ENCODE measurements at regions of chr17 and their contacts with region 1.

Region 1: GRCh38 chr17:32877164-32877764 is 340 bp upstream of the MYO1D start:
- DNase-seq: peak; percentile 82 to 98 (median 90)
- ATAC-seq: peak; percentile 95 to 97 (median 96)
- H3K4me3 ChIP-seq: peak overlapping the region; percentile 35 to 45
- H3K4me3 Mint-ChIP-seq: peak overlapping the region; percentile 72 to 75 (median 74)
- H3K27ac ChIP-seq: peak overlapping the region; percentile 68
- H3K27ac Mint-ChIP-seq: peak overlapping the region; percentile 87 to 92
- H3K4me1 ChIP-seq: peaks cover 5 to 13% of the 10 kb centered on the region in 2 experiments
- H3K4me1 Mint-ChIP-seq: peaks cover 13 to 15% (median 15%) of the 10 kb centered on the region in 3 donors
- H3K27me3 ChIP-seq: no peaks in the 10 kb centered on the region
- H3K27me3 Mint-ChIP-seq: peaks cover 5 to 6% of the 10 kb centered on the region in 2 donors

Region 2: DNA sequence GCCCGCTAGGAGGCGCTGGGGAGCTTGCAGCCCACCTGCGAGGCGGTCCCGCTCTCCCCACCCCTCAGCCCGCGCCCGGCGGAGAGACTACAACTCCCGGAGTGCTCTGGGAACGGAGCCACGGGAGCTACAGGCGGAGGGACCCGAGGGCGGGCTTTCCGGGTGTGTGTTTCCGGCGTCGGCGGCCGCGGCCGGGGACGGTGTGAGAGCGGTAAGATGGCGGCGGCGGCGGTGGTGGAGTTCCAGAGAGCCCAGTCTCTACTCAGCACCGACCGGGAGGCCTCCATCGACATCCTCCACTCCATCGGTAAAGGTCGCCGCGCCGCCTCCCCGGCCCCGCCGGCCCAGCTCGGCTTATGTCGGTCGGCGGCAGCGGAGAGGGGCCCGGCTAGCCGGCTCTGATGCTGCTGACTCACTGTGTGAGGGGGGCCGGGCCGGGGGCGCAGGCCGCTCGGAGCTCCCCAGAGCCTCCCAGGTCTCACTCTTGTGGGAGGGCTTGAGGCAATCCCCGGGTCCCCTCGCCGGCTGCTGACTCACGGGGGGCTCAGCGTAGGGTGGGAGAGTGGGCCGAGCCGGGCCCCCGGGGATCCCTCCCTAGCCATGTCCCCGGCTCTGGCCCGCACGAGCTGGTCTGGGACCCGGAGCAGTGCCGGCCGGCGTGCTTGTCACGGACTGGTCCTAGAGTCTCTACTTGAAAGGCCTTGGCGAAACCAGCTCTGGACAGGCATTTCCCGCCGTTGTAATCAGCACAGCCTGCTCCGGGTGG is 432.8 kb before region 1 on chr17 and contains the start of gene PSMD11:
- CTCF ChIA-PET with region 1: interaction called in 1 of 2 experiments, 13 read pairs
- POLR2A ChIA-PET with region 1: no interaction called
- DNase-seq: peak; percentile 97 to 99 (median 99)
- ATAC-seq: peak; percentile 97 to 98 (median 98)
- H3K4me3 ChIP-seq: peak within 1 kb of the TSS; percentile 82 to 94
- H3K4me3 Mint-ChIP-seq: peak within 1 kb of the TSS; percentile 87 to 93 (median 90)
- H3K27ac ChIP-seq: peak within 1 kb of the TSS; percentile 56
- H3K27ac Mint-ChIP-seq: peak within 1 kb of the TSS; percentile 75 to 81
- H3K4me1 ChIP-seq: peaks cover 12 to 21% of the 10 kb centered on the region in 2 experiments
- H3K4me1 Mint-ChIP-seq: peaks cover 31 to 42% (median 37%) of the 10 kb centered on the region in 3 donors
- H3K27me3 ChIP-seq: no peaks in the 10 kb centered on the region
- H3K27me3 Mint-ChIP-seq: no peaks in the 10 kb centered on the region
- total RNA-seq, gene PSMD11: 56.3 to 72.8 (median 62.9) TPM

Region 3: DNA sequence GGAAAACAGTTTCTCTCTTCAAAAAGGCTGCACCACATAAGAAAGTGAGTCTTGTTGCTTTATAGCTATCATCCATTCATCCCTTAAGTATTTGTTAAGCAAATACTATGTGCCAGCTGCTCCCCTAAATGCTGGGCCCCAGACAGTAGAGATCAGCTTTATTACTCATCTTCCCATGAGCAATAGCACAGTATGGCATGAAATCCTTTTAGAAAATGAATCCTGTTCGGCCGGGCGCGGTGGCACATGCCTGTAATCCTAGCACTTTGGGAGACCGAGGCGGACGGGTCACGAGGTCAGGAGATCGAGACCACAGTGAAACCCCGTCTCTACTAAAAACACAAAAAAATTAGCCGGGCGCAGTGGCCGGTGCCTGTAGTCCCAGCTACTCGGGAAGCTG is 99.8 kb before region 1 on chr17:
- CTCF ChIA-PET with region 1: interaction called, 3 to 47 read pairs
- POLR2A ChIA-PET with region 1: no interaction called
- DNase-seq: no peak
- ATAC-seq: no peak
- H3K4me3 ChIP-seq: no peak overlapping the region
- H3K4me3 Mint-ChIP-seq: no peak overlapping the region
- H3K27ac ChIP-seq: no peak overlapping the region
- H3K27ac Mint-ChIP-seq: no peak overlapping the region
- H3K4me1 ChIP-seq: no peaks in the 10 kb centered on the region
- H3K4me1 Mint-ChIP-seq: no peaks in the 10 kb centered on the region
- H3K27me3 ChIP-seq: peaks cover 0 to 2% of the 10 kb centered on the region in 2 experiments
- H3K27me3 Mint-ChIP-seq: no peaks in the 10 kb centered on the region

Region 4: GRCh38 chr17:32783602-32784001 is 93.7 kb before region 1 on chr17:
- CTCF ChIA-PET with region 1: interaction called, 3 to 47 read pairs
- POLR2A ChIA-PET with region 1: interaction called in 1 of 2 experiments, 3 read pairs
- DNase-seq: peak in 2 of 35 experiments; percentile 10 to 67
- ATAC-seq: peak in 3 of 4 experiments; percentile 49 to 56 (median 51)
- H3K4me3 ChIP-seq: no peak overlapping the region
- H3K4me3 Mint-ChIP-seq: no peak overlapping the region
- H3K27ac ChIP-seq: no peak overlapping the region
- H3K27ac Mint-ChIP-seq: no peak overlapping the region
- H3K4me1 ChIP-seq: no peaks in the 10 kb centered on the region
- H3K4me1 Mint-ChIP-seq: no peaks in the 10 kb centered on the region
- H3K27me3 ChIP-seq: no peaks in the 10 kb centered on the region
- H3K27me3 Mint-ChIP-seq: no peaks in the 10 kb centered on the region

Region 5: GRCh38 chr17:32794533-32795246 is 82.6 kb before region 1 on chr17:
- CTCF ChIA-PET with region 1: no interaction called
- POLR2A ChIA-PET with region 1: no interaction called
- DNase-seq: no peak
- ATAC-seq: no peak
- H3K4me3 ChIP-seq: no peak overlapping the region
- H3K4me3 Mint-ChIP-seq: no peak overlapping the region
- H3K27ac ChIP-seq: no peak overlapping the region
- H3K27ac Mint-ChIP-seq: no peak overlapping the region
- H3K4me1 ChIP-seq: no peaks in the 10 kb centered on the region
- H3K4me1 Mint-ChIP-seq: no peaks in the 10 kb centered on the region
- H3K27me3 ChIP-seq: peaks cover 0 to 2% of the 10 kb centered on the region in 2 experiments
- H3K27me3 Mint-ChIP-seq: peaks cover 3 to 7% of the 10 kb centered on the region in 2 donors